OCI-LY7 (cell line): ENCODE measurements at regions of chr7 and their contacts with region 1.

Region 1: GRCh38 chr7:33050535-33051318 is 11.8 kb downstream of the NT5C3A start:
- DNase-seq: peak; percentile 60
- H3K4me3 ChIP-seq: peak overlapping the region; percentile 46
- H3K27ac ChIP-seq: peak overlapping the region; percentile 78
- H3K4me1 ChIP-seq: peaks cover 78% of the 10 kb centered on the region
- CTCF ChIP-seq: peak; percentile 91

Region 2: GRCh38 chr7:32803406-32804141 is 247.2 kb before region 1 on chr7:
- CTCF ChIA-PET with region 1: no interaction called
- POLR2A ChIA-PET with region 1: no interaction called
- intact Hi-C with region 1: no loop called
- DNase-seq: no peak
- H3K4me3 ChIP-seq: no peak overlapping the region
- H3K27ac ChIP-seq: no peak overlapping the region
- H3K4me1 ChIP-seq: no peaks in the 10 kb centered on the region
- CTCF ChIP-seq: no peak

Region 3: GRCh38 chr7:32891800-32892520 is 158.8 kb before region 1 on chr7:
- CTCF ChIA-PET with region 1: no interaction called
- POLR2A ChIA-PET with region 1: interaction called, 10 read pairs
- intact Hi-C with region 1: loop called (anchors 2 kb)
- DNase-seq: peak; percentile 95
- H3K4me3 ChIP-seq: peak overlapping the region; percentile 84
- H3K27ac ChIP-seq: peak overlapping the region; percentile 91
- H3K4me1 ChIP-seq: peaks cover 33% of the 10 kb centered on the region
- CTCF ChIP-seq: no peak